ENCODE measurements at regions of chr11 and their contacts with region 1.

Region 1: DNA sequence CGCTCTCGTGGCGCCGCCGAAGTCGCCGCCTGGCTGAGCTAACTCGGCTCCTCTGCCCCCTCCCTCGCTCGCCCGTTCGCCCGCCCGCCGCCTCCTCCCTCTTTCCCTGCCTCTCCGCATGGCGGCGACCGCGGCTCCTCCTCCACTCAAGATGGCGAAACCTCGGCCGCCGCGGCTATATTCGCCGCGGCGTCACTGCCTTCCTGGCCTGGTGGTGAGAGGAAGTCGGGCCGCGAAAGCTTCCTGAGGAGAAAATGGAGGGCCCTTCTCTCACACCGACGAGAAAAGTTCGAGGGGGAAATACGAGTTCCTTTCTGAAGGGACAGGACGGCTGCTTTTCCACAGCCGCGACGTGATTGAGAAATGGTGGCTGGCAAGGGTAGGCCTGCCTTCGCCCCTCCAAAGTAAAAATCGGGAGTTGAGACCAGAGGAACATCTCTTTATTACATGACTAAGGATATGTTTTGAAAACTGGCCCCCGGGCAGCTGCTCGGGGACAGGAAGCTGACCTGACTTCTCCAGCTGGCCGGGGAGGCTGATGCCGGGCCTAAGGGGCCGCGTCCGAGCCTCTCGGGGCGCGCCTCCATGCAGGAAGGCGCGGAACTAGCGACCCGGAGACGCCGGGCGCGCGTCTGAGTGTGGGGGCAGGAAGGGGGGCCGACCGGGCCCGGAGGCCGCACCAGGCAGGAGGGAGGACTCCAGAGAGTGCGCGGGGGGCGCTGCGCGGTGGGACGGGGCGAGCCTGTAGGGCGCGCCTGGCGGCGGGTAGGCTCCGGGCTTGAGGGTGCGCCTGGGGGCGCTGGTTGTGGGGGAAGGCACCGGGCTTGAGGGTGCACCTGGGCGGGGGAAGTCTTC is at the start of gene DDX6:
- DNase-seq: peak; percentile 86
- H3K4me3 ChIP-seq: peak within 1 kb of the TSS; percentile 70 to 87 (median 84)
- H3K27ac ChIP-seq: peak within 1 kb of the TSS; percentile 89
- H3K4me1 ChIP-seq: peaks cover 21% of the 10 kb centered on the region
- H3K27me3 ChIP-seq: no peaks in the 10 kb centered on the region
- CTCF ChIP-seq: peak; percentile 7 to 38
- POLR2A ChIP-seq: no peak
- total RNA-seq, gene DDX6: 132 and 138 TPM in 2 replicates

Region 2: DNA sequence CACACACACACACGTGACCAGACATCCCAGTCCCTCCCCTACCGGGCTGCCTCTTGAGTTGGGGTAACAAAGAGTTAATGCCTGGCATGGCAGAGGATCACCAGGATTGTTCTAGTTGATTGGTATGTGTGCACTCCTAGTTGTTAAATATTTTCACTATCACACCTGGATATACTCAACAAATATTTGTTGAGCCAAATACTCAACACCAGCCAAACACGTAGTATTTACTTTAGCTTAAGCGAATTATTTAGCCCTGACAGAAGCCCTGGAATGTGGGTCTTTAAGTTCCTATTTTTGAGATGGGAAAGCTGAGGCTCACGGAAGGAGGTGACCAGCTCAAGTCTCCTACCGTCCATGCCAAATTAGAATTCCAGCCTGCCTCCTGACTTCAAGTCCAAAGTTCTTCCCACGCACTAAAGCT is 476.3 kb before region 1 on chr11:
- CTCF ChIA-PET with region 1: no interaction called
- POLR2A ChIA-PET with region 1: no interaction called
- dilution Hi-C with region 1: no loop called
- intact Hi-C with region 1: no loop called
- DNase-seq: no peak
- H3K4me3 ChIP-seq: no peak overlapping the region
- H3K27ac ChIP-seq: no peak overlapping the region
- H3K4me1 ChIP-seq: no peaks in the 10 kb centered on the region
- H3K27me3 ChIP-seq: peaks cover 7 to 18% of the 10 kb centered on the region in 2 experiments
- CTCF ChIP-seq: no peak
- POLR2A ChIP-seq: no peak

Region 3: DNA sequence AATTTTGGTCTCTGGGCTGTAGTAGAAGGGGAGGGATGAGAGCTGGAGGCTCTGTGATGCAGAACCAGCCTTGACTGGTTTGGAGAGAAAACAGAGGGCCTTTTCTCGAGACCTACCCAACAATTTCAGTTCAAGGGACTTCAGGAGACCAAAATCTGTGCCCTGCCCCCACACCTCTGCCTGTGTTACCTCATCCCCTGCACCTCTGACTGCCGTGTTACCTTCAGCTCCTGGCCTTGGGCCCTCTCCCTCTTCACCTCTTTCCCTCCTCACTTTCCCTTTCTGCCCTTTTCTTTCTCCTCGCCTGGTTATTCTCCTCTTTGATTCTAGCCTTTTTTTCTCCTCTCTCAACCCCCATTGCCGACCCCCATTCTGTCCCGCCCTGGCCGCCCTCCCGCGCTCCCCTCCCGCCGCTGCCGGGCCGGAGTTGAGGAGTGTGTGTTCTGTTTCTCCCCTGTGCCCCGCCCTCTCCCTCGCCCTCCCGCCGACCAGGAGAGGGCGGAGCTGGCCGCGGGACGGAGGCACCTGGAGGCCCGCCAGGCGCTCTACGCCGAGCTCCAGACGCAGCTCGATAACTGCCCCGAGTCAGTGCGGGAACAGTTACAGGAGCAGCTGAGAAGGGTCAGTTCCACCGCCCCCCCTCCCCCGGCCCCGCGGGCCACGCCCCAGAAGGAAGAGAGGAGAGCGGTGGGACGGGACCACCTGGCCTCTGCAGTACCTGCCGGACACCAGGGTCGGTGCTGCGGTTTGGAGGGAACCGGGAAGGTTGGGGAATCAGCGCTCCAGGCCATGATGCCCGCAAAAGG is 156.7 kb before region 1 on chr11:
- CTCF ChIA-PET with region 1: no interaction called
- POLR2A ChIA-PET with region 1: no interaction called
- dilution Hi-C with region 1: no loop called
- intact Hi-C with region 1: no loop called
- DNase-seq: no peak
- H3K4me3 ChIP-seq: no peak overlapping the region
- H3K27ac ChIP-seq: no peak overlapping the region
- H3K4me1 ChIP-seq: no peaks in the 10 kb centered on the region
- H3K27me3 ChIP-seq: no peaks in the 10 kb centered on the region
- CTCF ChIP-seq: no peak
- POLR2A ChIP-seq: no peak

Region 4: DNA sequence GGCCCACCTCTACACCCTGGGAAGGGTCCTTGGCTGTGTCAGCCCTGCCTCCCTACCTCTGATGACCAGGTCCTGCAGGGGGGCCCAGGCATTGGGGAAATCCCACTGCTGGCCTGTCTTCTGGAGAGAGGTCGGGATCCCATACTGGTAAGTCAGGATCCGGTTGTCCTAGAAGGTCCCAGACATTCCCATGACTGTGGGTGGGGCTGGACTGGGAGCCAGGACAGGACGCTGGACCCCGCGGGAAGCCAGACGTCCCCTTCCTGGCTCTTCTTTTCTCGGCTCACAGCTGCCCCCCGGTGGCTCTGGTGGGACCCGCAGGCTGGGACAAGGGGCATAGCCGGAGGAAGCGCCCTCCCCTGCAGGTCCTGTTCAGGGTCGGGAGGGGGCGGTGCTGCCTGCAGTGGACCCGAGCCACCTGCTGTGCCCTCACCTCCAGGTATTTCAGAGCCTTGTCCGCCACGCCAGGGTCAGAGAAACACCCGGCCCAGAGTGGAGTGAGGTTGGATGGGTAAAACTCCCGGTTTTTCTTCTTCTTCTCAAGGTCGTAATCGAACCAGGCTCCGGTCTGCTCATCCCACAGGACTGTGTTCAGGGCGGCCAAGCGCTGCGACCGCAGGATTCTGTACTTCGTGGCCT is 131.9 kb before region 1 on chr11:
- CTCF ChIA-PET with region 1: interaction called, 3 read pairs
- POLR2A ChIA-PET with region 1: no interaction called
- dilution Hi-C with region 1: no loop called
- intact Hi-C with region 1: loop called (anchors 1 kb)
- DNase-seq: peak; percentile 86
- H3K4me3 ChIP-seq: no peak overlapping the region
- H3K27ac ChIP-seq: peak overlapping the region; percentile 18
- H3K4me1 ChIP-seq: peaks cover 6% of the 10 kb centered on the region
- H3K27me3 ChIP-seq: peaks cover 0 to 2% of the 10 kb centered on the region in 2 experiments
- CTCF ChIP-seq: peak; percentile 97 to 98
- POLR2A ChIP-seq: peak; percentile 65

Region 5: DNA sequence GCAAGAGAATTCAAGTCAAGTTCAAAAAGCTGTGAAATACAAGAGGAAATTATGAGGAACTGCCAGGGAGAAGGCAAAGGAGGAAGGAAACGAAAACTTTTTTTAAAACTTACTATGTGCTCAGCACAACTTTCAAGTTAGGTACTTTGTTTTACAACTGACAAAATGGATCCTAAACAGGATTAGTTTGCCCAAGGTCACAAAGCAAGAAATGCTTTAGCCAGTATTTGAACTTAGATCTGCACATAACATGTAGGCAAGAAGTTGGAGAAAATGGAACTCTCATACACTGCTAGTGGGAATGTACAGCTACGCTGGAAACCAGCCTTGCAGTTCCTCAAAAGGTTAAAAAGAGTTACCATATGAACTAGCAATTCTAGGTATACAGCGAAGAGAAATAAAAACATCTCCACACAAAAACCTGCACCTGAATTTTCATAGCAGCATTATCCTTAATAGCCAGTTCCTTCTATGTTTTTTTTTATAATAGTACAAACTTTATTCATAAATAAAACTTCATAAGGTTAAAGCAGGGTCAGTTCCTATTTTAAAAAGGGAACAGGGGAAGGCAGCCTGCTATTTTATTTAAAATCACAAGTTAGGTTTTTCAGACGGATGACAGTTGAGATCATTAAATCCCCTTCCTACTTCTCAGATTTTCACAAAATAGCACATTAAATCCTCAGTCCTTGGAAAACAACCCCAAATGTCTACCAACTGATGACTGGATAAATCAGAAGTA is 19.6 kb before region 1 on chr11:
- CTCF ChIA-PET with region 1: interaction called, 13 read pairs
- POLR2A ChIA-PET with region 1: no interaction called
- dilution Hi-C with region 1: no loop called
- intact Hi-C with region 1: no loop called
- DNase-seq: peak; percentile 48
- H3K4me3 ChIP-seq: no peak overlapping the region
- H3K27ac ChIP-seq: no peak overlapping the region
- H3K4me1 ChIP-seq: peaks cover 6% of the 10 kb centered on the region
- H3K27me3 ChIP-seq: no peaks in the 10 kb centered on the region
- CTCF ChIP-seq: no peak
- POLR2A ChIP-seq: no peak

Region 6: GRCh38 chr11:118928108-118928870 is 137.0 kb after region 1 on chr11:
- CTCF ChIA-PET with region 1: interaction called, 11 read pairs
- POLR2A ChIA-PET with region 1: interaction called, 4 read pairs
- dilution Hi-C with region 1: no loop called
- intact Hi-C with region 1: loop called (anchors 1 kb)
- DNase-seq: peak; percentile 91
- H3K4me3 ChIP-seq: peak overlapping the region; percentile 34 to 77 (median 64)
- H3K27ac ChIP-seq: peak overlapping the region; percentile 27
- H3K4me1 ChIP-seq: peaks cover 21% of the 10 kb centered on the region
- H3K27me3 ChIP-seq: peaks cover 0 to 2% of the 10 kb centered on the region in 2 experiments
- CTCF ChIP-seq: peak; percentile 89 to 92
- POLR2A ChIP-seq: no peak